Calu3 (cell line): ENCODE measurements at regions of chr15 and their contacts with region 1.

Region 1: DNA sequence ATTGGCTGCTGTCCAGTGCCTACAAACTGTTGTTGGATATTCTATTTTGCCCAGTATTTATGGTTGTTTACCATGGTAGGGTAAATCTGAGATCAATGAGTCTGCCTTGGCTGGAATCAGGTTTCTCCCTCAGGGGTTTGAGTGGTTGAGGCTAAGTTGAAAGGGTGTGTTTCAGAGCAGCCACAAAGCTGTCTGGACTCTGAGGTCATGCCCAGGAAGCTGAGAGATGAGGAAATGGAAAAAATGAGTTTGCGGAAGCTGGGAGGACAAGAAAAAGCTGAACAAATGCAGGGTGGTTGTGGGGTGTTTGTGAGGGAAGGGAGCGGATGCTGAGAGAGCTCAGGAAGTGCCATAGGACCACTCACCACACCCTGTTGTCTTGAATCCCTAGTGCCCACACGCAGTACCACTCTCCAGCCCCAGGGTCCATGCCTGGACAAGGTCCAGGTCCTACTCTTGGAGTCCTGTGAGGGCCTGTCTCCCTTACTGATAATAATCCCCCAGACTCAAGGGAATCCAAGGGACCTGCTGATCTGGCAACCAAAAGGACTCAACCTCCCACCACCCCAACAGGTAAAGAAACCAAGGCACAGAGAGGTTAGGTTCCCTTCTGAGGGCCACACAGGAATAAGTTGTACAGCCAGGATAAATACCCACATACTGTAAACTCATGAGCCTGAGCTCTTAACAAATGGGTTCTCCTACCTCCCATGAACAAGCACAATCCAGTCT is 81.6 kb downstream of the PPCDC start:
- DNase-seq: peak; percentile 93
- H3K4me3 Mint-ChIP-seq: peak overlapping the region; percentile 58
- H3K27ac Mint-ChIP-seq: peak overlapping the region; percentile 100
- H3K4me1 Mint-ChIP-seq: peaks cover 51% of the 10 kb centered on the region
- H3K27me3 Mint-ChIP-seq: peaks cover 13% of the 10 kb centered on the region
- CTCF ChIP-seq: no peak

Region 2: GRCh38 chr15:74937596-74938296 is 167.2 kb before region 1 on chr15 and contains the start of gene COX5A:
- CTCF ChIA-PET with region 1: no interaction called
- intact Hi-C with region 1: no loop called
- DNase-seq: peak; percentile 97
- H3K4me3 Mint-ChIP-seq: peak within 1 kb of the TSS; percentile 93
- H3K27ac Mint-ChIP-seq: peak within 1 kb of the TSS; percentile 66
- H3K4me1 Mint-ChIP-seq: peaks cover 9% of the 10 kb centered on the region
- H3K27me3 Mint-ChIP-seq: peaks cover 9% of the 10 kb centered on the region
- CTCF ChIP-seq: no peak
- total RNA-seq, gene COX5A: 272 and 280 TPM in 2 replicates

Region 3: GRCh38 chr15:75058127-75058905 is 46.7 kb before region 1 on chr15:
- CTCF ChIA-PET with region 1: interaction called, 5 read pairs
- intact Hi-C with region 1: loop called (anchors 2 kb)
- DNase-seq: peak; percentile 47
- H3K4me3 Mint-ChIP-seq: peak overlapping the region; percentile 5
- H3K27ac Mint-ChIP-seq: peak overlapping the region; percentile 57
- H3K4me1 Mint-ChIP-seq: peaks cover 50% of the 10 kb centered on the region
- H3K27me3 Mint-ChIP-seq: no peaks in the 10 kb centered on the region
- CTCF ChIP-seq: no peak

Region 4: GRCh38 chr15:75069301-75069925 is 35.6 kb before region 1 on chr15:
- CTCF ChIA-PET with region 1: interaction called, 11 read pairs
- intact Hi-C with region 1: loop called (anchors 5 kb)
- DNase-seq: no peak
- H3K4me3 Mint-ChIP-seq: no peak overlapping the region
- H3K27ac Mint-ChIP-seq: no peak overlapping the region
- H3K4me1 Mint-ChIP-seq: peaks cover 41% of the 10 kb centered on the region
- H3K27me3 Mint-ChIP-seq: no peaks in the 10 kb centered on the region
- CTCF ChIP-seq: no peak

Region 5: GRCh38 chr15:76274226-76274625 is 1169.3 kb after region 1 on chr15:
- CTCF ChIA-PET with region 1: no interaction called
- intact Hi-C with region 1: no loop called
- DNase-seq: no peak
- H3K4me3 Mint-ChIP-seq: no peak overlapping the region
- H3K27ac Mint-ChIP-seq: no peak overlapping the region
- H3K4me1 Mint-ChIP-seq: no peaks in the 10 kb centered on the region
- H3K27me3 Mint-ChIP-seq: no peaks in the 10 kb centered on the region
- CTCF ChIP-seq: no peak